ENCODE measurements at regions of chr7 and their contacts with region 1.

Region 1: DNA sequence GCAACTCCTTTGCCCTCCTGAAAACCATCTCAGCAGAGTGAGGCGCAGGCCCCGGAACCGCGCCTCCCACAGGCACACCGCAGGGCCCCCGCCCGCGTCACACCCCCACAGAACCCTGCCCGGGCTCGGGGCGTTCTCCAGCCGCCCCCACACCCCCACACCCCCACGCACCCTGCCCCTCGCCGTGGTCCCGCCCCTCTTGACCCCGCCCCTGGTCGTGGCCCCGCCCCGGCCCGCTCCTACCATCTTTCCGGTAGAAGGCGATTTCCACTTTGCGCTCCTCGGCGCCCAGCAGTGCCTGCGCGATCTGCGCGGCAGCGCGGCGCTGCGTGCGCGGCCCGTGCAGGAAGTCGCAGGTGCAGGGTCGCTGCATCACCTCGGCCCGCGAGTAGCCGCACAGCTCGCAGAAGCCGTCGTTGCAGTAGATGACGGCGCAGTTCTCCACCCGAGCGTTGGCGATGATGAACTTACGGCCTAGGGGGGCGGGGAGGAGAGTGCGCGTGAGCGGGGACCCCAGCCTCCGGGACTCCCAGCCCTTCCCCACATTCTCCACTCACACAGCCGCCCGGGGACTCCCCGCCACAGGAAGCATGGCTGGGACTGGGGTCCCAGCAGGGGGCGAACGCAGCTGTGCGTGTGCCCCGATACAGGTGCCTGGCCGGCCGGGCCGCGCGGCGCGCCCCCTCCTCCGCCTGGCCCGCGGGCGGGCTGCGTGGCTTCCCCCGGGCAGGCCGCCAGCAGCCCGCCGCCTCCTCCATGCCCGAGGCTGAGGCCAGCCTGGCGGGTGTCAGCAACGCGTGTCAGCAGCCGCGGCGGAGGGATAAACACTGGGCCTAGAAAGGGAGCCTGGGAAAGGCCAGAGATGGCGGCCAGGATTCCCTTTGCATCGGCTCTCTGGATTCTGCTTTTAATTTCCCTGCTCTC is 3.4 kb downstream of the KCNH2 start:
- DNase-seq: peak; percentile 83
- ATAC-seq: peak; percentile 87
- H3K4me3 Mint-ChIP-seq: peak overlapping the region; percentile 77
- H3K27ac Mint-ChIP-seq: peak overlapping the region; percentile 32
- H3K4me1 Mint-ChIP-seq: peaks cover 21% of the 10 kb centered on the region
- H3K27me3 Mint-ChIP-seq: peaks cover 33% of the 10 kb centered on the region

Region 2: DNA sequence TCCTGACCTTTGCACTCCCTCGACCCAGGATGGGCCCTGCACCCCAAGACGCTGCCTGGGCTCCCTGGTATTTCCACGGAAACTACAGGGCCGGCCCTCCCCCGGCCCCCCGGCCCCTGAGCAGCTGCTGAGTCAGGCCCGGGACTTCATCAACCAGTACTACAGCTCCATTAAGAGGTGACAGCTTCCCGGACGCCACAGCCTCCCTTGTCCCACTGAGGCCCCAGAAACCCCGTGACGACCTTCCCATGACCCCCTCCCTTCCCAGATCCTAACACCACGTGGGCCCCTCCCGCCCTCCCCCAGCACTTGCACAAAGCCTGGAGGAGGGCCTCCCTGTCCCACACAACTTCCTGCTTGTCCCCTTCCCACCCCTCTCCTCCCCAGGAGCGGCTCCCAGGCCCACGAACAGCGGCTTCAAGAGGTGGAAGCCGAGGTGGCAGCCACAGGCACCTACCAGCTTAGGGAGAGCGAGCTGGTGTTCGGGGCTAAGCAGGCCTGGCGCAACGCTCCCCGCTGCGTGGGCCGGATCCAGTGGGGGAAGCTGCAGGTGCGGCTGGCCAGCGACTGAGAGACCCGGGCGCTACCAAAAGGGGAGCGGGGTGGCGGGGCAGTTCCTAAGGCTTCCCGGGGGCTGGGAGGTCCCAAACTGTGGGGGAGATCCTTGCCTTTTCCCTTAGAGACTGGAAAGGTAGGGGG is 21.8 kb after region 1 on chr7:
- CTCF ChIA-PET with region 1: no interaction called
- DNase-seq: no peak
- ATAC-seq: no peak
- H3K4me3 Mint-ChIP-seq: no peak overlapping the region
- H3K27ac Mint-ChIP-seq: no peak overlapping the region
- H3K4me1 Mint-ChIP-seq: peaks cover 4% of the 10 kb centered on the region
- H3K27me3 Mint-ChIP-seq: no peaks in the 10 kb centered on the region

Region 3: GRCh38 chr7:151017953-151018420 is 43.3 kb after region 1 on chr7:
- CTCF ChIA-PET with region 1: interaction called, 10 read pairs
- DNase-seq: peak; percentile 84
- ATAC-seq: peak; percentile 64
- H3K4me3 Mint-ChIP-seq: peak overlapping the region; percentile 69
- H3K27ac Mint-ChIP-seq: peak overlapping the region; percentile 52
- H3K4me1 Mint-ChIP-seq: peaks cover 45% of the 10 kb centered on the region
- H3K27me3 Mint-ChIP-seq: peaks cover 39% of the 10 kb centered on the region